Heart left ventricle (tissue), 16 donors: ENCODE measurements at regions of chr12 and their contacts with region 1.

Region 1: DNA sequence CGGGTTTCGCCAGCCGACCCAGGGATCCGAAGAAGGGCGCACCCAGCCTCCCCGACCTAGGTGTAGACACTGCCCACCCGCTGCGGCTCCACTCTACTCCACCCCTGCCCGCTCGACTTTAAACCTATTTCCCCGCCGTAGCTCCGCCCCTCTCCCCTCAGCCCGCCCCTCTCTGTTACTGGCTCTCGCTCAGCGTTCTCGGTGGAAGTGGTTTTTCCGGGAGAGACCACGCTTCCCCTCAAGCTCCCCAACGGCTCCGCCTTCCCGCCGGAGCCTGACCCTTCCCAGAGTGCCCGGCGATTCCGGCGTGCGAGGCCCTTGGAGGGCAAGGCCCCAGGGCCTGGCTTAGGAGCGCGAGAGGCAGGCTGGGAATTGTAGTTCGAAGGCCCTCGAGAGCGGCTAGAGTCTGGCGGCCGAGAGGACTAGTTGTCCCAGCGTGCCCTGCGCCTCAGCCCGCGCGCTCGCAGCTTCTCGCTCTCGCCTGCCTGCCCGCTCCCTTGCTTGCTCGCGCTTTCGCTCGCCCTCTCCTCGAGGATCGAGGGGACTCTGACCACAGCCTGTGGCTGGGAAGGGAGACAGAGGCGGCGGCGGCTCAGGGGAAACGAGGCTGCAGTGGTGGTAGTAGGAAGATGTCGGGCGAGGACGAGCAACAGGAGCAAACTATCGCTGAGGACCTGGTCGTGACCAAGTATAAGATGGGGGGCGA is at the start of gene PA2G4:
- DNase-seq: peak; percentile 98 to 99 (median 99)
- ATAC-seq: peak; percentile 98 to 99 (median 99)
- H3K4me3 ChIP-seq: peak within 1 kb of the TSS; percentile 45 to 93 (median 84)
- H3K27ac ChIP-seq: peak within 1 kb of the TSS; percentile 6 to 92 (median 84)
- H3K4me1 ChIP-seq: peaks cover 0 to 37% (median 22%) of the 10 kb centered on the region in 12 donors
- H3K27me3 ChIP-seq: no peaks in the 10 kb centered on the region
- CTCF ChIP-seq: peak in 1 of 12 donors; percentile 7
- POLR2A ChIP-seq: peak; percentile 55 to 93
- total RNA-seq, gene PA2G4: 66.0 to 105 (median 72.4) TPM

Region 2: GRCh38 chr12:56007564-56008559 is 96.4 kb before region 1 on chr12:
- intact Hi-C with region 1: loop called in 2 of 10 experiments (anchors 5 to 10 kb)
- DNase-seq: peak; percentile 57 to 80 (median 64)
- ATAC-seq: peak; percentile 54 to 86 (median 75)
- H3K4me3 ChIP-seq: peak overlapping the region; percentile 70 to 100 (median 92)
- H3K27ac ChIP-seq: peak overlapping the region; percentile 30 to 98 (median 94)
- H3K4me1 ChIP-seq: peaks cover 0 to 15% (median 7%) of the 10 kb centered on the region in 12 donors
- H3K27me3 ChIP-seq: no peaks in the 10 kb centered on the region
- CTCF ChIP-seq: peak in 1 of 12 donors; percentile 5
- POLR2A ChIP-seq: no peak

Region 3: DNA sequence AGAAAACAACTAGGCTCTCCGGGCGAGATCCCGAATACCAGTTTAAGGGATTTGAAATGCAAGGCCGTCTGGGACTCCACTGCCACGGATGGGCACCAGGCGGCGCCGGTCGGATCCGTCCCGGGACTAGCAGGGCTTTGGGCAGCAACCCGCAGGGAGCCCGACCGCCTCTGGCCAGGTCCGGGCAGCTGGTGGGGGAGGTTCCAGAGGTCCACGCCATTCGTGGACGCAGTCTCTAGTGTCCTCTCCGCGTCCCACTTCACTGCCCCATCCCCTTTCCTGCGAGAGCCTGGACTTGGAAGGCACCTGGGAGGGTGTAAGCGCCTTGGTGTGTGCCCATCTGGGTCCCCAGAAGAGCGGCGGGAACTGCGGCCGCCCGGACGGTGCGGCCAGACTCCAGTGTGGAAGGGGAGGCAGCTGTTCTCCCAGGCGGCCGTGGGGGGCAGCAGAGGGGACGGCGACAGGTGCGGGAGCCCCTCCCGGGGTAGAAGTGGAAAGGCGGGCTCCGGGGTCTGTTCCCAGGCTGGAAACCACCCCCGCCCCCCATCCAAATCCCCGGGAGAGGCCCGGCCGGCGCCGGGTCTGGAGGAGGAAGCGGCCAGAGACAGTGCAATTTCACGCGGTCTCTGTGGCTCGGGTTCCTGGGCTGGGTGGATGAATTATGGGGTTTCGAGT is 25.1 kb before region 1 on chr12:
- intact Hi-C with region 1: loop called in 1 of 10 experiments (anchors 1 kb)
- DNase-seq: peak; percentile 76 to 93 (median 86)
- ATAC-seq: peak; percentile 30 to 91 (median 88)
- H3K4me3 ChIP-seq: peak overlapping the region; percentile 30 to 67 (median 53)
- H3K27ac ChIP-seq: peak overlapping the region in 8 of 12 donors; percentile 5 to 74 (median 32)
- H3K4me1 ChIP-seq: peaks cover 0 to 26% (median 16%) of the 10 kb centered on the region in 12 donors
- H3K27me3 ChIP-seq: peaks cover 0 to 17% (median 10%) of the 10 kb centered on the region in 9 donors
- CTCF ChIP-seq: peak; percentile 54 to 81 (median 68)
- POLR2A ChIP-seq: no peak